Endothelial cell of umbilical vein (primary cell): ENCODE measurements at regions of chr4 and their contacts with region 1.

Region 1: GRCh38 chr4:152316969-152317368 is 218.9 kb downstream of the FBXW7 start:
- DNase-seq: no peak
- H3K4me3 ChIP-seq: no peak overlapping the region
- H3K27ac ChIP-seq: no peak overlapping the region
- H3K4me1 ChIP-seq: no peaks in the 10 kb centered on the region
- H3K27me3 ChIP-seq: no peaks in the 10 kb centered on the region
- CTCF ChIP-seq: no peak
- POLR2A ChIP-seq: no peak

Region 2: GRCh38 chr4:151933122-151933827 is 383.7 kb before region 1 on chr4:
- CTCF ChIA-PET with region 1: no interaction called
- POLR2A ChIA-PET with region 1: interaction called, 11 read pairs
- dilution Hi-C with region 1: no loop called
- intact Hi-C with region 1: no loop called
- DNase-seq: no peak
- H3K4me3 ChIP-seq: no peak overlapping the region
- H3K27ac ChIP-seq: no peak overlapping the region
- H3K4me1 ChIP-seq: no peaks in the 10 kb centered on the region
- H3K27me3 ChIP-seq: no peaks in the 10 kb centered on the region
- CTCF ChIP-seq: no peak
- POLR2A ChIP-seq: no peak

Region 3: DNA sequence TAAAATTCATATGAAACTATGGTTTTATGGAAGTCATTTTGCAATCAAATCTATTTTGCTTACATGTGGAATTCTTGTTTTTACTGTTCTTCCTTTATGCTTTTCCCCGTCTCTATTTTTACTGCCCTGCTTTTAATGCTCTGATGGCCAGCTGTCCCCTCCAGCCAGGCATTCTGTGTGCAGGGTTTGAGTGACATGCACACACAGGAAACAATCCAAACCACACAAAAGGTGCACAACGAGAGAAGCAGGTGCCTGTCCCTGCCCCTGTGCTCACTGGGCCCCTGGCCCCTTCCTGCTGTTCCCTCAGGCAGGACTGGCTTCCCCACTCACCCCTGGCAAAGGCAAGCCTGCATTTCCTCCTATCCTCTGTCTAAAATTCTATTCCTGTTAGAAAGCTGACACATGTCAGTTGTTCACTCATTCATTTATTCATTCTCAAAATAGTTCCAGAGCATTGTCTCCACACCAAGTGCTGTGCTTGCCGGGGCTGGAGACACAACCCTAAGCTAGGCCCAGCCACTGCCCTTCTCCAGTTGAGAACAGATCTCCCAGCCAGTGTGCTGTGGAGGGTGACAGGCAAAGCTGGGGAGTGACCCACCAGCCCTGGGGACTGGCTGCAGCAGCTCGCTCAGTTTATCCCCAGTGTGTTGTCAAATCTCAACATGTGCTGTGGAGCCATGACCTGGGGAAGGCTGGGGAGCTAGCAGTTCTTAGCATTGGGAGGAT is 127.4 kb before region 1 on chr4:
- CTCF ChIA-PET with region 1: no interaction called
- POLR2A ChIA-PET with region 1: no interaction called
- dilution Hi-C with region 1: no loop called
- intact Hi-C with region 1: no loop called
- DNase-seq: no peak
- H3K4me3 ChIP-seq: no peak overlapping the region
- H3K27ac ChIP-seq: no peak overlapping the region
- H3K4me1 ChIP-seq: no peaks in the 10 kb centered on the region
- H3K27me3 ChIP-seq: no peaks in the 10 kb centered on the region
- CTCF ChIP-seq: no peak
- POLR2A ChIP-seq: no peak

Region 4: DNA sequence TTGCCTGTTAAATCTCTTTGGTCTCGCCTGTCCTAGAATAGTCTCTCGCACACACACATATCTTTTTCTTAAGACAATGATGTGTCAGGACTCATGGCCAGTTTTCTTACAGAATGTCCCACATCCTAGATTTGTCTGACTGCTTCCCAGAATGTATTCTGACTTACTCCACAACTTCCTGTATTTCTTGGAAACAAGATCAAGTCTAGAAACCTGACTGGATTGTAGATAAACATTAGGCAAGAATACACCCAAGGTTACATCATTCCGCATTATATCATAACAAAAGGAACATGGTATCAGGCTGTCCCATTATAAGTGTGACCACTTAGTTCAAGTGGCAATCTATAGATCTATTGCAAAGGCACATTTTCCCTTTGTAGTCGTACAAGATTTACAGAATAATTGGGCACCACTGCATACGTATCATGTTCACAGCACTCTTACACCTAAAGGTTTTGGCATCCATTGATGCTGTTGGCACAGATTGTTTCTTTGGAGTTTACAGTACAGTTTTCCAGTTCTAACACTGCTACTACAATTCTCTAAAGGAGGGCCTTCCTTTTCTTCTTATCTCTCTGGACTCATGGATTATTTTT is 162.6 kb after region 1 on chr4:
- CTCF ChIA-PET with region 1: no interaction called
- POLR2A ChIA-PET with region 1: no interaction called
- dilution Hi-C with region 1: no loop called
- intact Hi-C with region 1: no loop called
- DNase-seq: peak; percentile 37
- H3K4me3 ChIP-seq: no peak overlapping the region
- H3K27ac ChIP-seq: peak overlapping the region; percentile 17
- H3K4me1 ChIP-seq: peaks cover 9% of the 10 kb centered on the region
- H3K27me3 ChIP-seq: no peaks in the 10 kb centered on the region
- CTCF ChIP-seq: no peak
- POLR2A ChIP-seq: no peak